ENCODE measurements at regions of chr1 and their contacts with region 1.

Region 1: GRCh38 chr1:159924981-159925712 is at the start of gene TAGLN2:
- DNase-seq: peak in 1 of 2 donors; percentile 97
- H3K4me3 ChIP-seq: peak within 1 kb of the TSS; percentile 78 to 96
- H3K27ac ChIP-seq: peak within 1 kb of the TSS; percentile 96
- H3K4me1 ChIP-seq: peaks cover 51% of the 10 kb centered on the region
- H3K27me3 ChIP-seq: no peaks in the 10 kb centered on the region
- CTCF ChIP-seq: no peak
- POLR2A ChIP-seq: peak in 1 of 2 donors; percentile 92
- total RNA-seq, gene TAGLN2: 290 TPM

Region 2: DNA sequence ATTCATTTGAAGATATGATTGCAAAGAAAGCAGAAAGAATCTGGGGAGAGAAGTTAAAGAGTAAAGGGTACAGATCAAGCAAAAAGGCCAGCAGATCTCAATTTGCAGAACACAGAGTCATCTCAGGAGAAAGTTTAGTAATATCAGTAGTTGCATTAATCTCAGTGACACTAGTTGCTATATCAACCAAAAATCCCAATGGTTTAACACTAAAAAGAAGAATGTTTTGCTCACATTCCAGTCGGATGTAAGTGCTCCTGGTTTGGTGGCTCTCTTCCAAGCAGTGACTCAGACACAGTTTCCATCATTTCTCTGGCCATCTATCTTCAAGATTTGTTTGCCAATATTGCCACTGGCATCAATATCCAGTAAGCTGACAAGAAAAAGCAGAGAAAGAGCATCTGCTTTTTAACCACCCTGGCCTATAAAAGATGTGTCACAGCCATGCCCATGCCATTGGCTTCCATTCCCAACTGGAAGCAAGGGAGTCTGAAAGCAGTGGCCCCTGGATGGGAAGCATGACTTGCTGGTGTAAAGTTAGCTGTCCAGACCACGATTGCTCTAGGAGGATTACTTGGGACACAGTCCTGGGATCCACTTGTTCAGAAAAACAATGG is 803.0 kb before region 1 on chr1:
- intact Hi-C with region 1: no loop called
- DNase-seq: no peak
- H3K4me3 ChIP-seq: no peak overlapping the region
- H3K27ac ChIP-seq: no peak overlapping the region
- H3K4me1 ChIP-seq: no peaks in the 10 kb centered on the region
- H3K27me3 ChIP-seq: no peaks in the 10 kb centered on the region
- CTCF ChIP-seq: no peak
- POLR2A ChIP-seq: no peak

Region 3: DNA sequence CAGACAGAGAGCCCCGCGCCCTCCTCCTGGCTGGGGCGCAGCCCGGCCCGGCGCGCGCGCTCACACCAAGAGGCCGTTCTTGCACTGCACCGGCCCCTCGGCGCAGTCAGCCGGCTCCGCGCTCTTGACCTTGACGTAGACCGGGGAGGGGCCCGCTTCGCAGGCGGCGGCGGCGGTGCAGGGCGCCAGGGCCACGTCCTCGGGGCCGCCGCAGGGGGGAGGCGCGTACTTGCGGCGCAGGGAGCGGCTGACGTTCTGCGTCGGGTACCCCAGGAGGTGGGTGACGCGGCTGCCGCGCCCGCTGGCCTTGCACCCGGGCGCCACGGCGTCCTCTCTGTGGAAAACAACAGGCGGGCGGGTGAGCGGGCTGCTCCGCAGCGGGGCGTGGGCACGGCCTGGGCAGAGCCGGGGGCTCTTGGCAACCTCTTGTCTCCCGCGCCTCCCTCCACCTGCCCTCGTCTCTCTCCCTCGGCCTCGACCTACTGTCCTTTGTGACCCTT is 70.4 kb before region 1 on chr1:
- intact Hi-C with region 1: loop called (anchors 5 kb)
- DNase-seq: no peak
- H3K4me3 ChIP-seq: peak overlapping the region; percentile 63 to 87
- H3K27ac ChIP-seq: peak overlapping the region; percentile 92
- H3K4me1 ChIP-seq: peaks cover 40% of the 10 kb centered on the region
- H3K27me3 ChIP-seq: no peaks in the 10 kb centered on the region
- CTCF ChIP-seq: peak in 1 of 3 experiments; percentile 18
- POLR2A ChIP-seq: peak in 1 of 2 donors; percentile 66

Region 4: GRCh38 chr1:160098852-160099561 is 173.9 kb after region 1 on chr1:
- intact Hi-C with region 1: loop called (anchors 10 kb)
- DNase-seq: peak in 1 of 2 donors; percentile 97
- H3K4me3 ChIP-seq: peak overlapping the region; percentile 72 to 93
- H3K27ac ChIP-seq: peak overlapping the region; percentile 93
- H3K4me1 ChIP-seq: peaks cover 35% of the 10 kb centered on the region
- H3K27me3 ChIP-seq: no peaks in the 10 kb centered on the region
- CTCF ChIP-seq: no peak
- POLR2A ChIP-seq: peak in 1 of 2 donors; percentile 58

Measured in vagina (tissue), 2 donors.